ENCODE measurements at regions of chr10 and their contacts with region 1.

Region 1: DNA sequence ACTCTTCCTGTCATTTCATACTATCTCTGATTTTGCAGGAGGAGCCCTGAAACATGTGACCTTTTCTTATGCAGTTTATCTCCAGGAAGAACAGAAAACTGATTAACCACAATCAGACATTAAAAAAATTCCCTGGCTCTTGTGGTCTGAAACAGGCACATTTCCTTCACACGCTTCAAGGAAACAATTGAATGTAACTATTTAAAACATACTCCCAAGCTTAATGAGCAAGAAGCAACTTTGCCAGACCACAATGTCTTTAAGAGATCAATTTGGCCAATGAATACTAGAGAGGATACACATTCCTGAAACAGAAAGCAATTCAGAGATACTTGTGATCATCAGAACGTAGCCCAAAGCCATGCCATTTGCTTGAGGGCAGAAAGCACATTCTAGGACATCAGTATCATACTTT is 65.8 kb downstream of the PIP4K2A start:
- DNase-seq: peak in 1 of 2 donors; percentile 56
- ATAC-seq: no peak
- H3K4me3 ChIP-seq: no peak overlapping the region
- H3K4me3 Mint-ChIP-seq: peak overlapping the region; percentile 86
- H3K27ac ChIP-seq: peak overlapping the region; percentile 91
- H3K27ac Mint-ChIP-seq: peak overlapping the region; percentile 97 to 99
- H3K4me1 ChIP-seq: peaks cover 86% of the 10 kb centered on the region
- H3K4me1 Mint-ChIP-seq: peaks cover 91 to 94% of the 10 kb centered on the region in 2 donors
- H3K27me3 ChIP-seq: no peaks in the 10 kb centered on the region
- H3K27me3 Mint-ChIP-seq: no peaks in the 10 kb centered on the region
- CTCF ChIP-seq: no peak

Region 2: GRCh38 chr10:22505911-22506685 is 142.5 kb before region 1 on chr10:
- intact Hi-C with region 1: loop called (anchors 10 kb)
- DNase-seq: peak; percentile 72 to 81
- ATAC-seq: peak; percentile 93 to 99 (median 99)
- H3K4me3 ChIP-seq: no peak overlapping the region
- H3K4me3 Mint-ChIP-seq: peak overlapping the region; percentile 85
- H3K27ac ChIP-seq: peak overlapping the region; percentile 54
- H3K27ac Mint-ChIP-seq: peak overlapping the region; percentile 86 to 89
- H3K4me1 ChIP-seq: peaks cover 32% of the 10 kb centered on the region
- H3K4me1 Mint-ChIP-seq: peaks cover 63 to 67% of the 10 kb centered on the region in 2 donors
- H3K27me3 ChIP-seq: no peaks in the 10 kb centered on the region
- H3K27me3 Mint-ChIP-seq: peaks cover 0 to 7% of the 10 kb centered on the region in 2 donors
- CTCF ChIP-seq: no peak

Region 3: GRCh38 chr10:22606164-22606614 is 42.4 kb before region 1 on chr10:
- intact Hi-C with region 1: loop called (anchors 1 kb)
- DNase-seq: peak; percentile 58 to 80
- ATAC-seq: peak; percentile 71 to 89 (median 86)
- H3K4me3 ChIP-seq: peak overlapping the region; percentile 1
- H3K4me3 Mint-ChIP-seq: peak overlapping the region; percentile 74
- H3K27ac ChIP-seq: peak overlapping the region; percentile 79
- H3K27ac Mint-ChIP-seq: peak overlapping the region; percentile 99
- H3K4me1 ChIP-seq: peaks cover 75% of the 10 kb centered on the region
- H3K4me1 Mint-ChIP-seq: peaks cover 87 to 97% of the 10 kb centered on the region in 2 donors
- H3K27me3 ChIP-seq: no peaks in the 10 kb centered on the region
- H3K27me3 Mint-ChIP-seq: no peaks in the 10 kb centered on the region
- CTCF ChIP-seq: no peak

Region 4: DNA sequence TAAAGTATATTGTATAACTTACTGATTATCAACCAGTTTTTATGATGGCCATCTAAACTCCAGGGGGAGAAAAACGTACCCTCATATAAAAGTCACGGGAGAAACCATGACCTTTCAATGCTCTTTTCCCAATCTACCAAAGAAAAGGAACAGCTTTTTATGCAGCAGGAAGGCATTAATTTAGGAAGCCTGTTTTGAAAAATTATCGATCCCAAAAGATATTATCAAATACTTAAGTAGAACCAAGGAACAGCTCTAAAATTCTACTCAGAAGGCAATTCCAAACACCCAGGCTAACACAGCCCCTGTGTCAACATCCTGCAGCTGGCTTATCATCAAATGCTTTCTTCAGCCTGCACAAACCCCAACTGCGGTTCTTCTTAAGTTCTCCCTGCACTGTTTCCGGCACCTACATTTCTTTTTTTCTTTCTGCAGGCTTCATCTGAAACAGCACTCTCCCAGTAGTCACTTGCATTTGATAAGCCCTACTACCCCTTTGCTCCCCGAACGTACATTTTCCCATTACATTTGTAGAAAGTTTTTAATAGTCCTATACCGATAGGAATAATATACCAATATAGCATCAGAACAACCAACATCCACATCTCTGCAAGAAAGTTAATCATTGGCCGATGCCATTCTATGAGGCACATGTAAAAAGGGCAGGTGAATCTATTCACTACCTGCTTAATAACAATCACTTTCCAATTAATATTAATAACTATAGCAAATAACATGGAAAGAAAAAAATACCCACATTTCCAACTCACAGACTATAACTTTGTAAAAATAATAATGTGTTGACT is 17.9 kb after region 1 on chr10:
- intact Hi-C with region 1: loop called (anchors 2 kb)
- DNase-seq: peak in 1 of 2 donors; percentile 91
- ATAC-seq: peak; percentile 78 to 89 (median 89)
- H3K4me3 ChIP-seq: peak overlapping the region; percentile 2
- H3K4me3 Mint-ChIP-seq: peak overlapping the region; percentile 87
- H3K27ac ChIP-seq: peak overlapping the region; percentile 38
- H3K27ac Mint-ChIP-seq: peak overlapping the region; percentile 81 to 99
- H3K4me1 ChIP-seq: peaks cover 35% of the 10 kb centered on the region
- H3K4me1 Mint-ChIP-seq: peaks cover 69 to 83% of the 10 kb centered on the region in 2 donors
- H3K27me3 ChIP-seq: no peaks in the 10 kb centered on the region
- H3K27me3 Mint-ChIP-seq: no peaks in the 10 kb centered on the region
- CTCF ChIP-seq: no peak

Region 5: DNA sequence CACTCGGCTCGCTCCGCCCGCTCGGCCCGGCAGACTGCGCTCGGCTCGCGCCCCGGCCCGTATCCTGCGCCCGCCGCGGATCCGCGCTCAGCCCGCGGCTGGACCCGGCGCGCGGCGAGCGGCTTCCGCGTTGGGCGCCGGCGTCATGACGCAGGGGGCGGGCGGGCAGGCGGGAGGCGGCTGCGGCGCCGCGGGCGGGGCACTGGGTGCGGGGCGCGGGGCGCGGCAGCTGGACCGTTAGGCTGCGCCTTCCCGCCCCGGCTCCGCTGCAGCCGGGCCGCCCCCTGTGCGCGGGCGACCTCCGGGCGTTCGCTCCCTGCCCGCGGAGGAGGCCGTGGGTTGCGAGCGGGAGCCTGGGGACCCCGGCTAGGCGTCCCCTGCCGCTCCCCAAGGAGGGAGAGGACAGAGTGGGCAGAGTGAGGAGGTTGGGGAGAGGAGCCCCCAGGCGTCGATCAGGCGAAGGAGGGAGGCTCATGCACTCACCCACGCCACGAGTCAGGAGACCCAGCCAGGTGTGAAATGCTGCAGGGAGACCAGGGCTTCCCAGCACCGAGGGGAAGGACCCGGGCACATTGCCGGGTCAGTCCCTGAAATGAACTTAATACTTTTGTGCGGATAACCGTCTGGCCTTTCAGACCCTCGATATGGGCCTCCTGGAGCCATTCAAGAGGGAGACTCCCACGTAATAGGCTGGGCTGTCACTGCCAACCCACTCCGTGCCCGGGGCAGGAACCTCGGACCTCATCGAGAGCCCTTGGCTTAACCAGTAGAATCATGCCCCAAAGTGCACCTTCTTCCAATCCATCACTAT is 66.1 kb after region 1 on chr10 and contains the start of gene PIP4K2A:
- intact Hi-C with region 1: loop called (anchors 5 kb)
- DNase-seq: peak; percentile 79 to 91
- ATAC-seq: peak; percentile 78 to 91 (median 88)
- H3K4me3 ChIP-seq: peak within 1 kb of the TSS; percentile 98
- H3K4me3 Mint-ChIP-seq: peak within 1 kb of the TSS; percentile 94
- H3K27ac ChIP-seq: peak within 1 kb of the TSS; percentile 94
- H3K27ac Mint-ChIP-seq: peak within 1 kb of the TSS; percentile 82 to 87
- H3K4me1 ChIP-seq: peaks cover 14% of the 10 kb centered on the region
- H3K4me1 Mint-ChIP-seq: peaks cover 34 to 35% of the 10 kb centered on the region in 2 donors
- H3K27me3 ChIP-seq: no peaks in the 10 kb centered on the region
- H3K27me3 Mint-ChIP-seq: no peaks in the 10 kb centered on the region
- CTCF ChIP-seq: no peak
- total RNA-seq, gene PIP4K2A: 311 to 423 (median 405) TPM

Region 6: GRCh38 chr10:22934726-22935125 is 286.2 kb after region 1 on chr10:
- intact Hi-C with region 1: no loop called
- DNase-seq: no peak
- ATAC-seq: no peak
- H3K4me3 ChIP-seq: no peak overlapping the region
- H3K4me3 Mint-ChIP-seq: no peak overlapping the region
- H3K27ac ChIP-seq: no peak overlapping the region
- H3K27ac Mint-ChIP-seq: no peak overlapping the region
- H3K4me1 ChIP-seq: no peaks in the 10 kb centered on the region
- H3K4me1 Mint-ChIP-seq: no peaks in the 10 kb centered on the region
- H3K27me3 ChIP-seq: no peaks in the 10 kb centered on the region
- H3K27me3 Mint-ChIP-seq: no peaks in the 10 kb centered on the region
- CTCF ChIP-seq: no peak

Measured in natural killer cell (primary cell).